Activated CD8-positive, alpha-beta T cell treated with anti-CD3 and anti-CD28 coated beads for 36 hours (primary cell): ENCODE measurements at regions of chr6 and their contacts with region 1.

Region 1: DNA sequence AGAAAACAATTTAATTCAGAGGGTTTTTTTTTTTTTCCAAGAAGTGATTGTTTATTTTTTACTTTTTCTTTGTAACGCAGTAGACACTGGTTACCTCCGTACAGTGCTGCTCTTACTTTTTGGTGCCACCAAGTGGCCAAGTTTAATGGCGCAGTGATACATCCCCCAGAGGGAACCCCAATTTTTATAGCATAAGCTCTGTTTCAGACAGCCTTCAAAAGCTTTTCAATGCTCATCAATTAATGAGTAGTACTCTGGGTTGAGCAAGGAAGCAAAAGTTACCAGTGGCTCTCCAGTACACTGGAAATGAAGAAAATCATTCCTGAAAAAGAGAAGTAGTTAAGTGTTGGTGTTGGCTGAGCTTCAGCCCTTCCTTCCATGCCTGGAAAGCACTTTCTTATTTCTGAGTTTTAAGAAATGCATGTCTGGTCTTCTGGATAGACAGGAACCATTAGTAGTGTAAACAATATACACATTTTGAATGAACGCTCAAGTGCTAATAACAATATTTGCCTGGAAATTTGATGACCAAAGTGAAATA is 129.1 kb upstream of the SMLR1 start:
- DNase-seq: peak; percentile 82
- ATAC-seq: peak; percentile 95
- H3K4me3 Mint-ChIP-seq: no peak overlapping the region
- H3K27ac Mint-ChIP-seq: peak overlapping the region; percentile 57
- H3K4me1 Mint-ChIP-seq: peaks cover 26% of the 10 kb centered on the region
- H3K27me3 Mint-ChIP-seq: no peaks in the 10 kb centered on the region
- CTCF ChIP-seq: peak; percentile 89

Region 2: GRCh38 chr6:130293800-130294199 is 404.3 kb before region 1 on chr6:
- CTCF ChIA-PET with region 1: interaction called, 10 read pairs
- POLR2A ChIA-PET with region 1: no interaction called
- intact Hi-C with region 1: no loop called
- DNase-seq: peak; percentile 55
- ATAC-seq: peak; percentile 51
- H3K4me3 Mint-ChIP-seq: no peak overlapping the region
- H3K27ac Mint-ChIP-seq: no peak overlapping the region
- H3K4me1 Mint-ChIP-seq: no peaks in the 10 kb centered on the region
- H3K27me3 Mint-ChIP-seq: no peaks in the 10 kb centered on the region
- CTCF ChIP-seq: peak; percentile 59

Region 3: GRCh38 chr6:130322673-130323268 is 375.3 kb before region 1 on chr6:
- CTCF ChIA-PET with region 1: interaction called, 33 read pairs
- POLR2A ChIA-PET with region 1: interaction called, 3 read pairs
- intact Hi-C with region 1: loop called (anchors 1 kb)
- DNase-seq: peak; percentile 68
- ATAC-seq: peak; percentile 39
- H3K4me3 Mint-ChIP-seq: no peak overlapping the region
- H3K27ac Mint-ChIP-seq: no peak overlapping the region
- H3K4me1 Mint-ChIP-seq: no peaks in the 10 kb centered on the region
- H3K27me3 Mint-ChIP-seq: no peaks in the 10 kb centered on the region
- CTCF ChIP-seq: peak; percentile 90

Region 4: DNA sequence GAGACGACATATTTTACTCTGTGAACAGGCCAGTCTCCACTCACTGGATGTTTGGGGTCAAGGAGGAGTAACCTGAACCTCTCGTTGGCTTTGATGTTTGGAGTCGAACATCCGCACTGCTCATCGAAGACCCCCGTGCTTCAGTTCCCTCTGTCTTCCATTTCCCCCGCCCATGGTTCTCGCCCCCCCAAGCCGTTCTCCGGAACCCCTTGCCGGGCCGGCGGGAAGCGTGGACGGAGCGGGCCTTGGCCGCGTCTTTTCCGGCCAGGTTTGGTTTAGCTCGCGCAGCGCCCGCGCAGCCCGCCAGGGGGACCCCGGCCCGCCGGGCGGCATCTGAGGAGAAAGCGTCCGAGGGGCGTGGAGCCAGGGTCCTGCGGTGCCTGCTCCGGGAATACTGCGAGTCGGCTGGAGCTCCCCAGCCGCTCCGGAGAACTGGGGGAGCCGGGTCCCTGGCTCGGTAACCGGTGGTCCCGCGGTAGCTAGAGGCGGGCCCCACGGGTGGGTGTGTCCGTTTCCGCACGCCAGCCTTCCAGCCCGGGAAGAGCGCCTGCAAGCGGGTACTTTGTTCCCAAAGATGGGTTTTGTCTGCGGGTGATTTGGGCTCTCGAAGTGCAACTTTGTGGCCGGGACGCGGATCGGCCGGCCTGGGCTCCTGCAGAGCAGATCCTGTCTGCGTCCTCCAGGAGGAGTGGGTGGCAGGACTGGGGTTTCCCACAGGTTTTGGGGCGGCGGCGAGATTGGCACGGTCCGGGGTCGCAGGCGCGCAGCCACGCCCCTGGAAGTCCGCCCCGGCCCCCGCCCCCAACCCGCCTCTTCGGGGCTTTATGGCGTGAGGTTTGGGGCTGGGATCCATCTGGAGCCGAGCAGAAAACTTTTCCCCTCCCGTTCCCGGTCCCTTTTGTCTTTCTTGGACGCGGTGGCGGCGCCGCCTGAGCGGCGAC is 332.6 kb before region 1 on chr6 and contains the start of gene TMEM200A:
- CTCF ChIA-PET with region 1: interaction called, 13 read pairs
- POLR2A ChIA-PET with region 1: no interaction called
- intact Hi-C with region 1: no loop called
- DNase-seq: peak; percentile 45
- ATAC-seq: no peak
- H3K4me3 Mint-ChIP-seq: peak within 1 kb of the TSS; percentile 63
- H3K27ac Mint-ChIP-seq: peak within 1 kb of the TSS; percentile 12
- H3K4me1 Mint-ChIP-seq: peaks cover 17% of the 10 kb centered on the region
- H3K27me3 Mint-ChIP-seq: peaks cover 15% of the 10 kb centered on the region
- CTCF ChIP-seq: peak; percentile 81
- total RNA-seq, gene TMEM200A: 0.20 TPM

Region 5: GRCh38 chr6:130681028-130681427 is 17.0 kb before region 1 on chr6:
- CTCF ChIA-PET with region 1: interaction called, 12 read pairs
- POLR2A ChIA-PET with region 1: no interaction called
- intact Hi-C with region 1: no loop called
- DNase-seq: no peak
- ATAC-seq: no peak
- H3K4me3 Mint-ChIP-seq: no peak overlapping the region
- H3K27ac Mint-ChIP-seq: no peak overlapping the region
- H3K4me1 Mint-ChIP-seq: peaks cover 2% of the 10 kb centered on the region
- H3K27me3 Mint-ChIP-seq: no peaks in the 10 kb centered on the region
- CTCF ChIP-seq: no peak

Region 6: DNA sequence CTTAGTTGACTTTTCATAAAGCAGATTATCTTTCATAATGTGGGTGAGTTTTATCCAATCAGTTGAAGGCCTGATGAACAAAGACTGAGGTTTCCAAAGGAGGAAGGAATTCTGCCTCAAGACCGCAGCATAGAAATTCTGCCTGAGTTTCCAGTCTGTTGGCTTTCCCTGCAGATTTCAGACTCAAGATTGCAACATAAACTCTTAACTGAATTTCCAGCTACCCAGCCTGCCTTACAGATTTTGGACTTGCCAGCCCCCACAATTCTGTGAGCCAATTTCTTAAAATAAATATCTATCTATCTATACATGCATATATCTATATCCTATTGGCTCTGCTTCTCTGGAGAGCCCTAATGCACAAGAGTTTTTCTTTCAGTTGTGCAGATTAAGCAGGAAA is 71.8 kb after region 1 on chr6:
- CTCF ChIA-PET with region 1: no interaction called
- POLR2A ChIA-PET with region 1: no interaction called
- intact Hi-C with region 1: no loop called
- DNase-seq: no peak
- ATAC-seq: no peak
- H3K4me3 Mint-ChIP-seq: no peak overlapping the region
- H3K27ac Mint-ChIP-seq: no peak overlapping the region
- H3K4me1 Mint-ChIP-seq: no peaks in the 10 kb centered on the region
- H3K27me3 Mint-ChIP-seq: no peaks in the 10 kb centered on the region
- CTCF ChIP-seq: no peak

Region 7: GRCh38 chr6:131602781-131603312 is 904.8 kb after region 1 on chr6:
- CTCF ChIA-PET with region 1: no interaction called
- POLR2A ChIA-PET with region 1: no interaction called
- intact Hi-C with region 1: no loop called
- DNase-seq: no peak
- ATAC-seq: no peak
- H3K4me3 Mint-ChIP-seq: no peak overlapping the region
- H3K27ac Mint-ChIP-seq: no peak overlapping the region
- H3K4me1 Mint-ChIP-seq: no peaks in the 10 kb centered on the region
- H3K27me3 Mint-ChIP-seq: no peaks in the 10 kb centered on the region
- CTCF ChIP-seq: no peak